ENCODE measurements at regions of chr16 and their contacts with region 1.

Region 1: DNA sequence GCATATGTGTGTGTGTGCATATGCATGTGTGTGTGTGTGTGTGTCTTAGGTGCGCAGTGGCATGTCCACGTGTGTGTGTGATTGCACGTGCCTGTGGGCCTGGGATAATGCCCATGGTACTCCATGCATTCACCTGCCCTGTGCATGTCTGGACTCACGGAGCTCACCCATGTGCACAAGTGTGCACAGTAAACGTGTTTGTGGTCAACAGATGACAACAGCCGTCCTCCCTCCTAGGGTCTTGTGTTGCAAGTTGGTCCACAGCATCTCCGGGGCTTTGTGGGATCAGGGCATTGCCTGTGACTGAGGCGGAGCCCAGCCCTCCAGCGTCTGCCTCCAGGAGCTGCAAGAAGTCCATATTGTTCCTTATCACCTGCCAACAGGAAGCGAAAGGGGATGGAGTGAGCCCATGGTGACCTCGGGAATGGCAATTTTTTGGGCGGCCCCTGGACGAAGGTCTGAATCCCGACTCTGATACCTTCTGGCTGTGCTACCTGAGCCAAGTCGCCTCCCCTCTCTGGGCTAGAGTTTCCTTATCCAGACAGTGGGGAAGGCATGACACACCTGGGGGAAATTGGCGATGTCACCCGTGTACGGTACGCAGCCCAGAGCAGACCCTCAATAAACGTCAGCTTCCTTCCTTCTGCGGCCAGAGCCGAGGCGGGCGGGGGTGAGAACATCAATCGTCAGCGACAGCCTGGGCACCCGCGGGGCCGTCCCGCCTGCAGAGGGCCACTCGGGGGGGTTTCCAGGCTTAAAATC is 47.6 kb downstream of the IL21R start:
- DNase-seq: peak; percentile 91
- CTCF ChIP-seq: no peak

Region 2: GRCh38 chr16:25838724-25839186 is 1610.9 kb before region 1 on chr16:
- in situ Hi-C with region 1: loop called (anchors 25 kb)
- DNase-seq: peak; percentile 22
- CTCF ChIP-seq: peak; percentile 68

Region 3: DNA sequence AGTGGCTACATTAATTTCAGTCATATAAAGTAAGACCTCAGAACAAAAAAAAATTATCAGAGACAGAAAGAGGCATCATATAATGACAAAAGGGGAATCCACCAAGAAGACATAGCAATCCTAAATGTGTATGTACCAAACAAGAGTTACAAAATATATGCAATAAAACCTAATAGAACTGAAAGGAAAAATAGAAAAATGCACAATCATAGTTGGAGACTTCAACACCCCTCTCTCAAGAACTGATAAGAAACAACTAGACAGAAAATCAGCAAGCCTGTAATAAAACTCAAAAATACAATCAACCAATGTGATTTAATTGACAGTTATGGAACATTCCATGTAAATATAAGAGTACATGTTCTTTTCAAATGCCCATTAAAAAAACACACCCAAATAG is 444.2 kb before region 1 on chr16:
- in situ Hi-C with region 1: no loop called
- DNase-seq: no peak
- CTCF ChIP-seq: no peak

Region 4: DNA sequence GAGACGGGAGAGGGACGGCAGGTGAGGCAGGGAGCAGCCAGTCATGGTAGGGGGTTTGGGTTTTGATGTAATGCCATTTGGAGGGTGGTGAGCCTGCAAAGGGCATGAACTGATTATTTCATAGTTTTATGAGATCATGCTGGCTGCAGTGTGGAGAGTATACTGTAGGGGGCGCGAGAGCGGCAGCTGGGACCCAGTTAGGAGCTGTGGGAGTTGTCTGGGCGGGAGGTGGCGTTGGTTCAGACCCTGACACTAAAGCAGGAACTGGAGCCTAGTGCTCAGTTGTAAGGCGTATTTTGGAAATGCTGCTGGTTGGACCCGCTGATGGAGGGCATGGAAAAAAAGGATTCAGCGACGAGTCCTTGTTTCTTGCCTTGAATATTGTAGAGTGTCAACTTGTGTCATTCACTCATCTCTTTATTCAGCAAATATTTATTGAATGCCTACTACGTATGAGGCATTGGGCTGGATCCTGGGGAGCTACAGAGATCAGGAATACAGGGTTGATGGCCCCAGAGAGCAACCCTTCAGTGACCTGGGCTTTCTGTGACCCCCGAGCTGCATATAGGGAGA is 270.0 kb before region 1 on chr16:
- in situ Hi-C with region 1: loop called (anchors 10 kb)
- DNase-seq: peak; percentile 87
- CTCF ChIP-seq: peak; percentile 94

Region 5: DNA sequence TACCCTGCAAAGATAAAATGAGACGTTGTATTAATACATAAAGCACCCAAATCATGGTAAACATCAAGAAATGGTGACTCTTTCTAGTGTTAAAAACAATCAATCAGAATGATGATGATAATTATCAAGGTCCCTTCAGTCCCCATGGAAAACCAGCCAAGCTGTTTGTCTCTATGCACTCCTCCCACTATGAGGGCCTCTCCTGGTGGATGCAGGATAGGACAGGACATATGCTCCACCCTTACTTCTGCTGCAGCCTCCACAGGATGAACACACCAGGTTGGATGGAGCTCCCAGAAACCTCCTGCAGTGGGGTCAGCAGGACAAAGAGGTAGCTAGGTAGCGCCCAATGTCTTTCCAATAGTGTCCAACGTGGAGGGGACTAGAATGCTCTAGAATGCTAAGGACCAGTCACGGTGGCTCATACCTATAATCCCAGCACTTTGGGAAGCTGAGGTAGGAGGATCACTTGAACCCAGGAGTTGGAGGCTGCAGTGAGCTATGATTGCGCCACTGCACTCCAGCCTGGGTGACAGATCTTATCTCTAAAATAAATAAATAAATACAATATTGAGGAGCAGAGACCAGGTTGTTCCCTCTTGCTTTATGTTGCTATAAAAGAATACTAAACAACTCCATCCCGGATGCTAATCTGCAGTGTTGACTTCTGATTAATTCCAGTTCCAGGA is 256.2 kb before region 1 on chr16:
- in situ Hi-C with region 1: no loop called
- DNase-seq: no peak
- CTCF ChIP-seq: no peak

Region 6: GRCh38 chr16:27235055-27235937 is 214.3 kb before region 1 on chr16:
- in situ Hi-C with region 1: loop called (anchors 10 kb)
- DNase-seq: peak; percentile 76
- CTCF ChIP-seq: peak; percentile 65

Region 7: DNA sequence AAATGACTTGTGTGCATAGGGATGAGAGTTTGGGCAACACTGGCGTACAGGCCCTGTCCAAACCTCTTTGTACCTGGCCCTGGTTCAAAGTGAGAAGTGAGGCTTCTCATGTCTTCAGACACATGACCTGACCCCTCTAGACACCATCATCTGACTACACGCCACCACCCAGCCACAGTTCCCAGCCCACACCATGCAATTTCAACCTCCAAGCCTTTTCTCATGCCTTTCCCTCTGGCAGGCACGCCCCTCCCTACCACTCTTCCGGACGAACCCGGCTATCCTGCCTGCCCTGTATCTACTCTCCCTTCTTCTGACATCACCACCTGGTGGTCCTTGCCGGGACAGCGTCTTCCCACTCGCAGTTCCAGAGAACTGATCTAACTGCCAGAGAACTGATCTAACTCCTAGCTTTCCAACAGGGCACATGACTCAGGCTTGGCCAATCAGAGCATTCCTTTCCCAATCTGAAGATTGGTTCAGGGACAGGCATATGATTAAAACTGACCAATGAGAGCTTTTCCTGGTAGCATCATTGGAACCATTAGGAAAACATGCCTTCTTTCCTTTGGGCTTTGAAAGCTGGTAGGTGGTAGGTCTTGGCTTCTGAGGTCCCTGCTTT is 74.7 kb before region 1 on chr16:
- in situ Hi-C with region 1: loop called (anchors 10 kb)
- DNase-seq: peak; percentile 76
- CTCF ChIP-seq: no peak

Measured in GM13976 (cell line).